ENCODE measurements at regions of chr16 and their contacts with region 1.

Region 1: GRCh38 chr16:69286941-69287713 is 24.0 kb upstream of the VPS4A start:
- DNase-seq: peak in 1 of 3 donors; percentile 86
- ATAC-seq: peak; percentile 55
- H3K4me3 ChIP-seq: no peak overlapping the region
- H3K4me1 ChIP-seq: no peaks in the 10 kb centered on the region
- CTCF ChIP-seq: peak; percentile 23

Region 2: DNA sequence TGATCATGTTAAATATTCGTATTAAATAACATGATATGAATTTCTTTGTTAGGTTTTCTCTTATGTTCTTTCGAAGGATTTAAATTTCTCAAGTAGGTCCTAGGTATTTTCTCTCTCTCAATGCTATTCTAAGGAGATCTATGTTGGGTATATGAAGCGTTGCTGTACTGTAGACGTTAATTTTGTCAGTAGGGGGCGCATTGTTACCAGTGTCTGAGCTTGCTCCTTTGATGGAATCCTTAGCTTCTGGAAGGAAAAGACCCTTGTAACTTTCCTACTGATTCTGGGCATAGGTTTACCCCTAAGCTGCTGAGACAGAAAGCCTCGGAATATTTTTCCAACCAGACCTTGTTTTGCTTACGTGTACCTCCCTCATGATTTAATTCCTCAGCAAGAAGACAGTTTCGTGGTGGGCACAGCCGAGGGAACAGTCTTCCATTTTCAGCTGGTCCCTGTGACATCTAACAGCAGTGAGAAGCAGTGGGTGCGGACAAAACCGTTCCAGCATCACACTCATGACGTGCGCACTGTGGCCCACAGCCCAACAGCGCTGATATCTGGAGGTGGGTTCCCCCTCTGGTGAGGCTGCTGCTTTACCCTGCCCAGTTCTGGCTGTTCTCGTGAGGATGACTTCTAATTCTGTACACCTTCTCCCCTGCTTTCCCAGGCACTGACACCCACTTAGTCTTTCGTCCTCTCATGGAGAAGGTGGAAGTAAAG is 136.8 kb before region 1 on chr16:
- intact Hi-C with region 1: loop called (anchors 5 kb)
- DNase-seq: peak in 1 of 3 donors; percentile 92
- ATAC-seq: peak; percentile 87
- H3K4me3 ChIP-seq: no peak overlapping the region
- H3K4me1 ChIP-seq: no peaks in the 10 kb centered on the region
- CTCF ChIP-seq: peak; percentile 39

Measured in mucosa of descending colon (tissue), 3 donors.